Thyroid gland (tissue), 4 donors: ENCODE measurements at regions of chr3 and their contacts with region 1.

Region 1: GRCh38 chr3:120795017-120795648 is 52.6 kb downstream of the GTF2E1 start:
- DNase-seq: peak; percentile 81 to 88
- H3K4me3 ChIP-seq: no peak overlapping the region
- H3K27ac ChIP-seq: no peak overlapping the region
- H3K4me1 ChIP-seq: no peaks in the 10 kb centered on the region
- H3K27me3 ChIP-seq: no peaks in the 10 kb centered on the region
- CTCF ChIP-seq: peak; percentile 66 to 83 (median 78)
- POLR2A ChIP-seq: no peak

Region 2: DNA sequence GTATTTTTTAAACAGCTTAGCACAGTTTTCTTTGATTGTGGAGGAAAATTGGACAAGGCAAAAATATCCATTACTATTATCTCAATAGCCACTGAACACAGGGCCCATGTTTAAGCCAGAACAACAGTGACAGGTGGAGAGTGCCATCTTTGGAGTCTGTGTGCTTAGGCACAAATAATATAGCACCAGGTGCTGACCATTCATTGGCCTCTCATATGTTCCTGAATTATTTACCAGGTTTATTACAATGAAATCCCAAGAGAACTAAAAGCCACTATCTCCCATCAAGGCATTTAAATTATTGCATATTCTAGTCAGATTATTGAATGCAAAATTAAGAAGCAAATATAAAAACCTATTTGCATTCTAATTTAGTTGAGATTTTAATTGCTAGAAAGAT is 549.7 kb before region 1 on chr3:
- intact Hi-C with region 1: loop called (anchors 10 kb)
- DNase-seq: no peak
- H3K4me3 ChIP-seq: no peak overlapping the region
- H3K27ac ChIP-seq: no peak overlapping the region
- H3K4me1 ChIP-seq: no peaks in the 10 kb centered on the region
- H3K27me3 ChIP-seq: no peaks in the 10 kb centered on the region
- CTCF ChIP-seq: no peak
- POLR2A ChIP-seq: no peak

Region 3: GRCh38 chr3:120730576-120731542 is 64.3 kb before region 1 on chr3:
- intact Hi-C with region 1: no loop called
- DNase-seq: no peak
- H3K4me3 ChIP-seq: no peak overlapping the region
- H3K27ac ChIP-seq: no peak overlapping the region
- H3K4me1 ChIP-seq: no peaks in the 10 kb centered on the region
- H3K27me3 ChIP-seq: no peaks in the 10 kb centered on the region
- CTCF ChIP-seq: no peak
- POLR2A ChIP-seq: no peak